ENCODE measurements at regions of chr16 and their contacts with region 1.

Region 1: DNA sequence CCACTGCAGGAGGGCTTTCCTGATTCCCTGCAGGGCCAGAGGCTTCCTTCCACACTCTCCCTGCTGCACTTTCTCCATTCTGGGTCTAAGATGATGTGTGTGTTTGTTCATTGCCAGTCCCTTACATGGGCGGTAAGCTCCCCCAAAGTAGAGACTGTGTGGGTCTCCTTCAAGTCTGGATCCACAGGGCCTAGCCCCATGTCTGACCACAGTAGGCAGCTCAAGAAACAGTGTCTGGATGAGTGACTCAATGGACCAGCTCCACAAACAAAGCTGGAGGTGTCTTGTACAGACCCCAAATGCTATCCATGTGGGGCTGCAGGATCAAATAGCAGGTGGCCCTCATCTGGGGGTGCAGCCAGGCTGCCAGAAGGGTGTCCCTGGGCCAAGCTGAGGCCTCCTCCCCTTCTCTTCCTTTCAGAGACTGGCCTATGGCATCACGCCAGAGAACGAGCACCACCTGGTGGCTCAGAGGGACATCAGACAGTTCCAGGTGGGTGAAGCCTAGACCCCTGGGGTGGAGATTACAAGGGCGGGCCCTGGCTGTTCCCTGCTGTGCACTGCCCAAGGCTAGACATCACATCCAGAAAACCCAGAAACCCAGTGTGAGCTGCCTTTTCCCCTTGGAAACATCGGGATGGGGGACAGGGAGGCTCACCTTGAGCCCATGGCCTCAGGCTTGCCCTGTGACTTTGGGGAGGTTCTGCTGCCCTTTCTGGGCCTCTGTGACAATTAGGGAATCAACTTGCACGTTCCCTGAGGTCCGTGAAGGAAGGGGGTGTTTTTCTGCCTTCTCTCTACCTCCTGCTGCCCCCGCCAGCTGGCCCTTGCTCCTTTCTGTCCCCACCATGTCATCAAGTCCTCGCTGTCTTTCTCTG is 45.9 kb downstream of the SLC6A2 start:
- DNase-seq: peak; percentile 36 to 61
- ATAC-seq: peak; percentile 24 to 88 (median 70)
- H3K4me3 ChIP-seq: no peak overlapping the region
- H3K27ac ChIP-seq: no peak overlapping the region
- H3K4me1 ChIP-seq: peaks cover 0 to 5% (median 0%) of the 10 kb centered on the region in 9 donors
- H3K27me3 ChIP-seq: peaks cover 0 to 16% (median 3%) of the 10 kb centered on the region in 7 donors
- CTCF ChIP-seq: peak; percentile 28 to 72 (median 67)

Region 2: GRCh38 chr16:55494994-55495421 is 206.7 kb before region 1 on chr16:
- intact Hi-C with region 1: loop called in 4 of 10 experiments (anchors 10 kb)
- DNase-seq: peak in 1 of 2 donors; percentile 68
- ATAC-seq: peak; percentile 72 to 93 (median 88)
- H3K4me3 ChIP-seq: no peak overlapping the region
- H3K27ac ChIP-seq: peak overlapping the region in 1 of 10 donors; percentile 31
- H3K4me1 ChIP-seq: peaks cover 0 to 36% (median 20%) of the 10 kb centered on the region in 9 donors
- H3K27me3 ChIP-seq: no peaks in the 10 kb centered on the region
- CTCF ChIP-seq: peak; percentile 22 to 74 (median 56)

Region 3: DNA sequence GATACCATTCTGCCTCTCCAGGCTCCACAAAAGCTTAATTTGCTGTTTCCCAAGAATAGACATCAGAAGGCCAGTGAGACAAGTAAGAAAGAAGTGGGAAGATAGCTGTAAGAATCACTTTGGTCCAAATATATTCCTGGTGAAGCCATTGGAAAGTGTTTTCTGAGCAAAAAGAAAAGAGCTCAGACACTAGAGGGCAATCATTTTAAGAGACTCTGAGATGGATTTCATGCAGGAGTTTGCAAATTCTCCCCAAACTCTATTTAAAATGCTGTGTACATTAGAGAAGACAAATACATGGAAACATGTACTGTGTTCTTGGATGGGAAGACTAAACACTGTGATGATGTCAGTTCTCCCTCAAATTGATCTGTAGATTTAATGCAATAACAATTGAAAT is 53.9 kb before region 1 on chr16:
- intact Hi-C with region 1: no loop called
- DNase-seq: no peak
- ATAC-seq: no peak
- H3K4me3 ChIP-seq: no peak overlapping the region
- H3K27ac ChIP-seq: no peak overlapping the region
- H3K4me1 ChIP-seq: no peaks in the 10 kb centered on the region
- H3K27me3 ChIP-seq: peaks cover 0 to 41% (median 29%) of the 10 kb centered on the region in 7 donors
- CTCF ChIP-seq: no peak